ENCODE measurements at regions of chr13 and their contacts with region 1.

Region 1: DNA sequence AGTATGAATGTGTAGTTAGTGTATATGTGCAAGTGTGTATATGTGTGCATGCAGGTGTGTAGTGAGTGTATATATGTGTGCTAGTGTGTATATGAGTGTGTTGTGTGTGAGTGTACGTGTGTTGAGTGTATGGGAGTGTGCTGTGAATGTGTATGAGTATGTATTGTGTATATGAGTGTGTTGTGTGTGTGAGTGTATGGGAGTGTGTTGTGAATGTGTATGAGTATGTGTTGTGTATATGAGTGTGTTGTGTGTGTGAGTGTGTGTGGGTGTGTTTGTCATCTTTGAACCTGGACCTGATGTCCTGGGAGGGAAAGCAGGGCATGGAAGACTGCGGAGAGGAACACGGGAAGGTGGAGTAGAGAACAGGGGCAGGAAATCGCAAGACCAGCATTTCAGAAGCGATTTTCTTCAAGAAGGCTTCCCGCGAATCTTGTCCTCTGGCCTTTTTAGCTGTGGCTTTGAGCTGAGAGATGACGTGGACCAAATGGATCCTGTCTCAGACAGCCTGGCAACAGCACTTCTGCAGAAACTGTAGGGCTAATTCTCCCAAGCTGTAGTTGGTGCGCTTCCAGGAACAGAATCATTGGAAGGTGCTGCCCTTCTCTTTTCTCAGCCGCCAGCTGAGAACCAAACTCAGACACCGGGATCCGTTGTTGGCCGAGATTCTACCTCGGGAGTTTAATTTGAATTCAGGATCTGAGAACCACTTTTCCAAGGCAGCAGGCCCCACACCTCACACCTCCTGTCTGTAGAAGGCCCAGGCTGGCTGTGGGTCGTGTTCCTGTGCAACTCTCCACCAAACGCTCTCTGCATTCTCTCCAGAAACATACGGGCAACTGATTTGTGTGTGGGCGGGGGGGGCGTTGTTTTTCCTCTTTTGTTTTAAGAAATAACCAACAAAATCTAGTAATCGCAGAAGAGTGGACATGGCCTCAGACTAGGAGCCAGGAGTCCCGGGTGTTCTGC is 94.7 kb upstream of the RAP2A start:
- DNase-seq: no peak
- H3K4me3 ChIP-seq: no peak overlapping the region
- H3K27ac ChIP-seq: peak overlapping the region; percentile 13 to 48
- H3K4me1 ChIP-seq: no peaks in the 10 kb centered on the region
- H3K27me3 ChIP-seq: no peaks in the 10 kb centered on the region
- CTCF ChIP-seq: no peak
- POLR2A ChIP-seq: no peak

Region 2: GRCh38 chr13:97280478-97280877 is 58.8 kb before region 1 on chr13:
- intact Hi-C with region 1: loop called (anchors 5 kb)
- DNase-seq: no peak
- H3K4me3 ChIP-seq: no peak overlapping the region
- H3K27ac ChIP-seq: peak overlapping the region; percentile 20 to 29
- H3K4me1 ChIP-seq: peaks cover 13% of the 10 kb centered on the region
- H3K27me3 ChIP-seq: no peaks in the 10 kb centered on the region
- CTCF ChIP-seq: no peak
- POLR2A ChIP-seq: no peak

Region 3: GRCh38 chr13:98798849-98799645 is 1459.7 kb after region 1 on chr13:
- intact Hi-C with region 1: no loop called
- DNase-seq: no peak
- H3K4me3 ChIP-seq: no peak overlapping the region
- H3K27ac ChIP-seq: no peak overlapping the region
- H3K4me1 ChIP-seq: no peaks in the 10 kb centered on the region
- H3K27me3 ChIP-seq: no peaks in the 10 kb centered on the region
- CTCF ChIP-seq: no peak
- POLR2A ChIP-seq: no peak